A549 (cell line): ENCODE measurements at regions of chr1 and their contacts with region 1.

Region 1: GRCh38 chr1:7667625-7668218 is 103.4 kb upstream of the VAMP3 start:
- DNase-seq: peak; percentile 66 to 75
- ATAC-seq: peak; percentile 75 to 88
- H3K4me3 ChIP-seq: no peak overlapping the region
- H3K27ac ChIP-seq: peak overlapping the region in 1 of 2 experiments; percentile 61; a peak in 2 of 6 replicates
- H3K4me1 ChIP-seq: 0 out of 3 replicates have a peak, but pooled peaks cover 3% of the 10 kb centered on the region
- CTCF ChIP-seq: peak; percentile 91
- EP300 ChIP-seq: no peak
- POLR2A ChIP-seq: no peak
- RAD21 ChIP-seq: peak; percentile 93 to 96

Region 2: GRCh38 chr1:7656557-7657215 is 11.0 kb before region 1 on chr1:
- CTCF ChIA-PET with region 1: interaction called, 30 read pairs
- POLR2A ChIA-PET with region 1: no interaction called
- DNase-seq: no peak
- ATAC-seq: no peak
- H3K4me3 ChIP-seq: no peak overlapping the region
- H3K27ac ChIP-seq: no peak overlapping the region
- H3K4me1 ChIP-seq: no peaks in the 10 kb centered on the region
- CTCF ChIP-seq: no peak
- EP300 ChIP-seq: no peak
- POLR2A ChIP-seq: no peak
- RAD21 ChIP-seq: no peak

Region 3: DNA sequence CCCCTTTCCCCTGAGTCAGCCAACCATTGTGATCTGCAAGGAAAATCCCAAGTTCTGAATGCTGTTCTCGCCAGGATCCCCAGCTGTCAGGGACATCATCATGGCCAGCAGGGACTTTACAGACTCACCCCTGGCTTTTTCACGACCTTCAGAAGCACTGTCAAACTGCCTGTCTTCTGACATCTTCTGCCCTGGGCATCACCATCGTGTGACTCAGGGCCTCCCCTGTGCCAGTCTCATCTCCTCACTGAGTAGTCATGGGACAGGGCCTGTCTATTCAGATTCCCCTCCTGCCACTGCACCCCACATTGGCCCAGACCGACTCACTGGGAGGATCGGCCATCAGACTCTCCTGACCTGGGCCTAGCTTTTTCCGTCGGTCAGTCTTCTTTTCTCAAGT is 30.9 kb after region 1 on chr1:
- CTCF ChIA-PET with region 1: interaction called, 14 read pairs
- POLR2A ChIA-PET with region 1: no interaction called
- DNase-seq: no peak
- ATAC-seq: no peak
- H3K4me3 ChIP-seq: no peak overlapping the region
- H3K27ac ChIP-seq: no peak overlapping the region
- H3K4me1 ChIP-seq: no peaks in the 10 kb centered on the region; the same call in 2 of the 3 replicates
- CTCF ChIP-seq: no peak
- EP300 ChIP-seq: no peak
- POLR2A ChIP-seq: no peak
- RAD21 ChIP-seq: no peak

Region 4: GRCh38 chr1:7738044-7738443 is 70.3 kb after region 1 on chr1:
- CTCF ChIA-PET with region 1: interaction called, 24 read pairs
- POLR2A ChIA-PET with region 1: no interaction called
- DNase-seq: no peak
- ATAC-seq: no peak
- H3K4me3 ChIP-seq: no peak overlapping the region
- H3K27ac ChIP-seq: no peak overlapping the region
- H3K4me1 ChIP-seq: no peaks in the 10 kb centered on the region
- CTCF ChIP-seq: no peak
- EP300 ChIP-seq: no peak
- POLR2A ChIP-seq: no peak
- RAD21 ChIP-seq: no peak

Region 5: GRCh38 chr1:7760245-7760644 is 92.5 kb after region 1 on chr1:
- CTCF ChIA-PET with region 1: interaction called, 410 read pairs
- POLR2A ChIA-PET with region 1: no interaction called
- DNase-seq: no peak
- ATAC-seq: no peak
- H3K4me3 ChIP-seq: no peak overlapping the region
- H3K27ac ChIP-seq: no peak overlapping the region
- H3K4me1 ChIP-seq: no peaks in the 10 kb centered on the region
- CTCF ChIP-seq: no peak
- EP300 ChIP-seq: no peak
- POLR2A ChIP-seq: no peak
- RAD21 ChIP-seq: no peak

Region 6: DNA sequence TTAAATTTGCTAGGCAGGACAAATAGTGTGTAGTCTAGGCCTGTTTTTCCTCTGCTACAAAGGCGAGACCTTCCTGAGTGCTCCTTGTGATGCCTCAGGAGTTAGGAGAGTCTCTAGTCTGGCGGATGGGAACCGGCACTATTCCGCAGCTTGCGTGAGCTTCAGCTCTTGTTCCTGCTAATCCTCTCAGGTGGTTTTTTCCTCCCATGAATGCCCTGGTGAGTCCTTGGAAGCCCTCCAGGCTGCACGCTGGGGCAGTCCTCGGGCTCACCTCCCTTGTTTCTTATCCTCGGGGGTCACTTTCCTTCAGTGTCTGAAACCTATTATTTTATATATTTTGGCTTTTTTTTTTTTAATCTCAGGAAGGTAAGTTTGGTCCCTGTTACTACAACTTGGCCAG is 157.0 kb after region 1 on chr1:
- CTCF ChIA-PET with region 1: no interaction called
- POLR2A ChIA-PET with region 1: no interaction called
- DNase-seq: no peak
- ATAC-seq: no peak
- H3K4me3 ChIP-seq: no peak overlapping the region
- H3K27ac ChIP-seq: no peak overlapping the region
- H3K4me1 ChIP-seq: no peaks in the 10 kb centered on the region
- CTCF ChIP-seq: no peak
- EP300 ChIP-seq: no peak
- POLR2A ChIP-seq: no peak
- RAD21 ChIP-seq: no peak